B cell (primary cell): ENCODE measurements at regions of chr2 and their contacts with region 1.

Region 1: GRCh38 chr2:60302377-60303141 is 250.9 kb downstream of the BCL11A start:
- DNase-seq: no peak
- ATAC-seq: no peak
- H3K4me3 ChIP-seq: no peak overlapping the region
- H3K4me3 Mint-ChIP-seq: no peak overlapping the region
- H3K27ac ChIP-seq: no peak overlapping the region
- H3K27ac Mint-ChIP-seq: no peak overlapping the region
- H3K4me1 ChIP-seq: peaks cover 16 to 17% of the 10 kb centered on the region in 2 donors
- H3K4me1 Mint-ChIP-seq: peaks cover 40% of the 10 kb centered on the region
- H3K27me3 ChIP-seq: no peaks in the 10 kb centered on the region
- H3K27me3 Mint-ChIP-seq: no peaks in the 10 kb centered on the region
- CTCF ChIP-seq: no peak

Region 2: GRCh38 chr2:60267122-60267521 is 35.4 kb before region 1 on chr2:
- CTCF ChIA-PET with region 1: no interaction called
- POLR2A ChIA-PET with region 1: no interaction called
- intact Hi-C with region 1: loop called (anchors 5 kb)
- DNase-seq: no peak
- ATAC-seq: no peak
- H3K4me3 ChIP-seq: no peak overlapping the region
- H3K4me3 Mint-ChIP-seq: no peak overlapping the region
- H3K27ac ChIP-seq: no peak overlapping the region
- H3K27ac Mint-ChIP-seq: no peak overlapping the region
- H3K4me1 ChIP-seq: no peaks in the 10 kb centered on the region
- H3K4me1 Mint-ChIP-seq: peaks cover 6% of the 10 kb centered on the region
- H3K27me3 ChIP-seq: no peaks in the 10 kb centered on the region
- H3K27me3 Mint-ChIP-seq: no peaks in the 10 kb centered on the region
- CTCF ChIP-seq: no peak